Sigmoid colon (tissue), 7 donors: ENCODE measurements at regions of chr1 and their contacts with region 1.

Region 1: DNA sequence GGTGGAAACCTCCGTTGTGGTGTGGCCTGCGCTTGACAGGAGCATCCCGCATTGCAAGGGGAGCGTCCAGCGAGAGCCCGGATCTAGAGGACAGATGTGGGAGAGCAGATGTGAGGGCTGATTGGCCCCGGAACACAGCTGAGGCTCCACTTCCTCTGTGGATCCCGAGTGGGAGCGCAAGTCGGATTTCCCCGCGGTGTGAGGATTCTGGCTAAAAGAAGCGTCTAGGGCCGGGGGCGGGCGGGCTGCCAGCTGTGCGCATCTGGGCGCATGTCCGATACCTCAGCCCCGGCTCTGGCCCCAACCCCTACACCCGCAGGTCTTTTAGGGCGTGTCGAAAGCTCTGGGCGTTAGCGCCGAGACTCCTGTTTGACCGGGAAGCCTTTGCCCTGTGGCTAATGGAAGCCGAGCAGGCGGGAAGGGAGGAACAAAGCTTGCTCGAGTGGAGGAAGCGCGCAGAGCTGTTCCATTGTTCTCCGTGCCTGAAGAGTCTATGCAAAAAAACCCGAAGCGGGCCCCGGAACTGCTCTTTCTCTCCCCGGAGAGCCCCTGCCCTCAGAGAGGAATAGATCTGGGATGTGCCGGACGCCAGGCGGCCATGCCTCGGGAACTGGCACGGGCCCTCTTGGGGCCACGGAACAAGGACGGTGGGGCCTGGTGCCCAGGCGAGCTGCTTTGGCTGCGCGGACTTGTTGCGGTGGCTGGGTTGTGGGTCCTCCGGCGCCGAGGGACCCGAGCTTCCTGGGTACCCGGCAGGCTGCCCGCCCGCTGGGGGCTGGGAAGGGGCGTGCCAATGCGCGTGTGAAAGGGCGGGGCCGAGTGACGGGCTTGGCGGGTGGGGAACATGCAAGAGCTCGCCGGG is 111.1 kb downstream of the NAV1 start:
- DNase-seq: peak; percentile 93
- H3K4me3 ChIP-seq: peak overlapping the region; percentile 22 to 60 (median 56)
- H3K27ac ChIP-seq: peak overlapping the region; percentile 72 to 78 (median 76)
- H3K4me1 ChIP-seq: peaks cover 0 to 46% (median 44%) of the 10 kb centered on the region in 4 donors
- H3K27me3 ChIP-seq: no peaks in the 10 kb centered on the region
- CTCF ChIP-seq: peak in 1 of 4 experiments; percentile 5
- EP300 ChIP-seq: no peak
- POLR2A ChIP-seq: peak in 1 of 2 donors; percentile 60

Region 2: GRCh38 chr1:201530741-201531531 is 119.1 kb before region 1 on chr1:
- intact Hi-C with region 1: loop called (anchors 5 kb)
- DNase-seq: peak; percentile 96
- H3K4me3 ChIP-seq: no peak overlapping the region
- H3K27ac ChIP-seq: peak overlapping the region; percentile 10 to 95 (median 53)
- H3K4me1 ChIP-seq: peaks cover 0 to 49% (median 45%) of the 10 kb centered on the region in 4 donors
- H3K27me3 ChIP-seq: no peaks in the 10 kb centered on the region
- CTCF ChIP-seq: peak; percentile 77 to 88 (median 86)
- EP300 ChIP-seq: no peak
- POLR2A ChIP-seq: no peak

Region 3: DNA sequence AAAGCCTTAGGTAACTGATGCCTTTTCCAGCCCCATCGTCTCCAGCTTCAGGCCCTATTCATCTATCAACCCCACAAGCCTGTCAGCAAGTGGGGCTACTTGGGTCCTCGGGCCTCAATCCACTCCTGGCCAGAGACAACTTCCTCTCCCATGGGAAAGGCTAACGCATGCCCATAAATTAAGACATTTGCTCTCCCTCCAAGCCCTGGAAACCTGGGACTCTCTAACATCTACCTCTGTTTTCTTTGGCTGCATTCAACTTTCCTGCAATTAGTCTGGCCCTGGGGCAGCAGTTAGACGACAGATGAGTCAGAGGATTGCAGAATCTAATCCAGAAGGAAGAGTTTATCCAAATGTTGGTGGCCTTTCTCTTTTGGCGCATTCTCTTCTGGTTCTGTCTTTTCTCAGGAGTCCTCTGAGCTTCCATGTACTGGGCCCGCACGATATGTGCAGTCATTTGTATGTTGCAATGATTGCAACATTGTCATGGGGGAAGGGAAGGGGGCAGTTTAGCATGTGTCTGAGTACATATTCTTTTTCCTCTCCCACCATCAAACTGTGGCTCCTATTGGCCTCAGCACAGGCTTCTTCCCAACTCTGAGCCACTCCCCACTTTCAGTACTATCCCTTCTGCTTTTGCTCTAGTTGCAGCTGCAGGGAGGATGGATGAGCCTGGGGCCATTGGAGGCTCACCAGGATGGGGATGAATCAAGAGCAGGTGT is 56.6 kb before region 1 on chr1:
- intact Hi-C with region 1: loop called (anchors 5 kb)
- DNase-seq: peak; percentile 93
- H3K4me3 ChIP-seq: no peak overlapping the region
- H3K27ac ChIP-seq: peak overlapping the region; percentile 33 to 68 (median 64)
- H3K4me1 ChIP-seq: peaks cover 0 to 42% (median 35%) of the 10 kb centered on the region in 4 donors
- H3K27me3 ChIP-seq: no peaks in the 10 kb centered on the region
- CTCF ChIP-seq: no peak
- EP300 ChIP-seq: peak; percentile 52 to 82 (median 63)
- POLR2A ChIP-seq: no peak

Region 4: DNA sequence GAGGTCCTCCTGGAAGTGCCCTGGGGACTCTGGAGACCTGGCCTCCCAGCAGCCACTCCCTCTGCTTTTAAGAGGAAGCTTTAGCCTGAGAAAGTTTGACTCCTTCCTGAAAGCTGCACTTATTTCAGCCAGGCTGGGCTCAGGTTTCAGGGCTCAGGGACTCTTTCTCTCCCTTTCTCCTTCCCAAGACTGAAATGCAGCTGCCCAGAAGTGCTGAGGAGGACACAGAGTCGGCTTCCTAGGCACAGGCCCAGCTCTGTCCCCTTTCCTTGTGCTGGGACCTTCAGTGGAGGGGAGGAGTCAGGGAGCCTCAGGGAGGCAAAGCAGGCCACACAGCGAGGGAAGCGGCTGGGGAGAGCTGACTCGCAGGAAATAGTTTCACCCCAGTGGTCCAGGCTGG is 26.2 kb after region 1 on chr1:
- intact Hi-C with region 1: no loop called
- DNase-seq: peak; percentile 78
- H3K4me3 ChIP-seq: no peak overlapping the region
- H3K27ac ChIP-seq: peak overlapping the region; percentile 5 to 71 (median 44)
- H3K4me1 ChIP-seq: peaks cover 0 to 39% (median 34%) of the 10 kb centered on the region in 4 donors
- H3K27me3 ChIP-seq: no peaks in the 10 kb centered on the region
- CTCF ChIP-seq: no peak
- EP300 ChIP-seq: no peak
- POLR2A ChIP-seq: no peak

Region 5: GRCh38 chr1:201703621-201704439 is 53.8 kb after region 1 on chr1:
- intact Hi-C with region 1: loop called (anchors 2 kb)
- DNase-seq: peak; percentile 94
- H3K4me3 ChIP-seq: no peak overlapping the region
- H3K27ac ChIP-seq: peak overlapping the region; percentile 65 to 76 (median 70)
- H3K4me1 ChIP-seq: peaks cover 0 to 37% (median 29%) of the 10 kb centered on the region in 4 donors
- H3K27me3 ChIP-seq: no peaks in the 10 kb centered on the region
- CTCF ChIP-seq: peak; percentile 82 to 96 (median 94)
- EP300 ChIP-seq: no peak
- POLR2A ChIP-seq: no peak

Region 6: DNA sequence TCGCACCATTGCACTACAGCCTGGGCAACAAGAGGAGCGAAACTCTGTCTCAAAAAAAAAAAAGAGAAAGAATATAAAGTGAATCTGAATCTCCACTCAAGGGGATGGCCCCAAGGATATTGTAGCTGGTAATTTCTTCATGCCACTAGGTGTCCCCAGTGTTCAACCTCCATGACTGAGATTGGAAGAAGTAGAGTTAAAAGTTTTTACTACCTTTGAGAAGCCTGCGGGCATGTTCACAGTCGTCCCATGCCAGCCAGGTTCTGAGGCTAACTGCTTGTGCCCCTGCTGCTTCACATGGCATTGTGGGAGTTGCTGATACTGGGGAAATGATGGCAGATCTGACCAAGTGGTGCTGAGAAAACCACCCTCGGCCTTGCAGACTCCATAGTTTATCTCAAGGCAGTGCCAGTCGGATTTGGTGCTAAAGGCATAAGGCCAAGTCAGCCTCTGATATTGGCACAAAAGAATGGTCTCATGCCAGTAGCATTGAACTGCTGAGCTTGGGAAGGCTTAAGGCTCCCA is 227.9 kb after region 1 on chr1:
- intact Hi-C with region 1: no loop called
- DNase-seq: no peak
- H3K4me3 ChIP-seq: no peak overlapping the region
- H3K27ac ChIP-seq: peak overlapping the region in 3 of 4 donors; percentile 42 to 47 (median 43)
- H3K4me1 ChIP-seq: peaks cover 0 to 11% (median 9%) of the 10 kb centered on the region in 4 donors
- H3K27me3 ChIP-seq: no peaks in the 10 kb centered on the region
- CTCF ChIP-seq: peak in 3 of 4 experiments; percentile 58 to 66 (median 62)
- EP300 ChIP-seq: no peak
- POLR2A ChIP-seq: no peak

Region 7: GRCh38 chr1:202255343-202255742 is 605.4 kb after region 1 on chr1:
- intact Hi-C with region 1: no loop called
- DNase-seq: no peak
- H3K4me3 ChIP-seq: no peak overlapping the region
- H3K27ac ChIP-seq: no peak overlapping the region
- H3K4me1 ChIP-seq: no peaks in the 10 kb centered on the region
- H3K27me3 ChIP-seq: peaks cover 0 to 10% (median 0%) of the 10 kb centered on the region in 3 donors
- CTCF ChIP-seq: no peak
- EP300 ChIP-seq: no peak
- POLR2A ChIP-seq: no peak